Activated CD8-positive, alpha-beta memory T cell treated with anti-CD3 and anti-CD28 coated beads, Interleukin-2, amount 10 ng/mL, durations not matched to agents 7 days and 5 days (primary cell): ENCODE measurements at regions of chr11 and their contacts with region 1.

Region 1: DNA sequence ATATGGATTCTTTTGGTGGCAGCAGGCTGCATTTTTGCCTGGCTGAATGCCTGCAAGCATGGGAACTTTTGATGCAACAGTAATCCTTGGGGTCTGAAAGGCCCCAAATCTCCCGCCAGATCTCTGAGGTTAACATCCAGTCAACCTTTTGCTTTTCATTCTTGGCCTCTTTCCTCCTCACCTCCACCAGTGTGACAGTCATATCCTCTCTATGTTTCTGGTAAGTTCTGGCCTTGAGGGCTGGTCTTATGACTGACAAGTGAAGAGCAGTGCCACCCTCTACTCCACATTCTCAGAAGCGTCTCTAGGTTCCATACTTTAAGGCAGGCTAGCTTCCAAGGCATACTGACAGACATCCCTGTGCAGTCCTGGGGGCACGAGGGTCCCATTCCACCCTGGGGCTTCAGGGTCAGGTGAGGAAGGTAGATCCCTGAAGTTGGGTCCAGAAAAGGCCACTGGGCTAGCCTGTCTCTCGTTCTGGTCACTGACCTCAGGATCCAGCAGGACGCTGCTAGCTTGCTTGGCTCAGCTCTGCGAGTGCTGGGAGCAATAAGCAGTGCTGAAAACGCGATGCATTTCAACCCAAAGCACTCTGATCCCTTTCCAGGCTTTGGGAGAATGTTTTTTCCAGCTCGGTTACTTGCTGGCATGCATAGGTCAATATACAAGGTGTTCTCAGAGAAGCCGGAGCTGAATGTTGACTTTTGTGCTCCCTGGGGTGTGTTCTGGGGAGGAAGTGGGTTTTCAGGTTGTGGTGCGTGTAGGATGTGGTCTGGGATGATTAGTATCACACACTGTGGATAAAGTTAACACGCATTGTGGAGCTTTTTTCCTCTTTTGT is 75.2 kb downstream of the PTPRJ start:
- DNase-seq: peak; percentile 93
- ATAC-seq: peak; percentile 92
- H3K4me3 Mint-ChIP-seq: peak overlapping the region; percentile 65
- H3K27ac Mint-ChIP-seq: peak overlapping the region; percentile 94
- H3K4me1 Mint-ChIP-seq: peaks cover 83% of the 10 kb centered on the region
- H3K27me3 Mint-ChIP-seq: no peaks in the 10 kb centered on the region

Region 2: DNA sequence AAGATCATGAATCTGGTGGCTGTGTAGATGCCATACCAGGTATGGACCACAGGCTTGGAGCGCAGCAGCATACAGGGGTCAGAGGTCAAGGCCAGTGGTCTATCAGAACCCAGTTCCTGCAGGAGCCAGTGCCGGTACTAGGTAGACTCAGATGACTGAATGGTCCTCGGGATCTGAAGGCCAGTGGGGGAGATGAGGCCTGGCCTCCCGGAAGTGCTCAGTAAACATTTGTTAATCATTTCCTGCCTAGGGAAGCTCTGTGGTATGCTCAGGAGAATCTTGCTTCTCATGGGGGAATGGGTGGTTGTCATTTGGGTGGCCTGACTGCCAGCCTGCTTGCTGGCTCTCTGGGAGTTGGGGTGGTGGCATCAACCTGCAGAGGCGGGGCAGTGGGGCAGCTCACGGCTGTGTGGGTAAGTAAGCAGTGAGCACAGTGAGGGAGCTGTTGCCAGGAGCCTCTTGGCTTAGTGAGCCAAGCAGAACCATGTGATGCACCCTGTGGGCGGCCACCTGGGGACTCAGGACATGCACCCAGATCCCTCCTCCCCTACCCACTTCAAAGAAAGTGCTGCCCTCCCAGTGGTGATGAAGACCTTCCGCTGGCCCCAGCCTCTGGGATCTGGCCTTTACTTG is 42.1 kb before region 1 on chr11:
- CTCF ChIA-PET with region 1: interaction called, 21 read pairs
- DNase-seq: peak; percentile 84
- ATAC-seq: peak; percentile 52
- H3K4me3 Mint-ChIP-seq: peak overlapping the region; percentile 49
- H3K27ac Mint-ChIP-seq: peak overlapping the region; percentile 98
- H3K4me1 Mint-ChIP-seq: peaks cover 90% of the 10 kb centered on the region
- H3K27me3 Mint-ChIP-seq: no peaks in the 10 kb centered on the region

Region 3: GRCh38 chr11:48210052-48210451 is 154.5 kb after region 1 on chr11:
- CTCF ChIA-PET with region 1: no interaction called
- DNase-seq: no peak
- ATAC-seq: no peak
- H3K4me3 Mint-ChIP-seq: no peak overlapping the region
- H3K27ac Mint-ChIP-seq: no peak overlapping the region
- H3K4me1 Mint-ChIP-seq: no peaks in the 10 kb centered on the region
- H3K27me3 Mint-ChIP-seq: peaks cover 2% of the 10 kb centered on the region